ENCODE measurements at regions of chr3 and their contacts with region 1.

Region 1: DNA sequence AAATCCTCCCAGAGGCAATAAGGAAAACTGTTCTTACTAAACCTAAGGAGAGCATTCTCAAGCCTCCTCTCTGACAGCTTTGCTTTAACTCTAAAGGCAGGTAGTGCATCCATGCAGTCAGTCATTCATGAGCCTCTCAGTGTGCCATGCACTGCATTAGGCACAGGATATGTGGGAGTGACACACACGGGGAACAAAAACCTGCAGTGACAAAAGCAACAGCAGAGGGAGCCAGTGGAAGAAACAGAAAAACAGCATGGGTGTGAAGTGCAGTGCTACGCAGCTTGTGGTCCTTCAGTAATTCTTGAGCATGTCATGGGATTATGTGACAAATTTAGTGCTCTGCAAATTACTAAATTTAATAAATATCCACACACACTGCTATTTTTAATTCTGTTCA is 230.7 kb downstream of the BBX start:
- DNase-seq: peak; percentile 31 to 45
- H3K4me3 ChIP-seq: no peak overlapping the region
- H3K4me3 Mint-ChIP-seq: no peak overlapping the region
- H3K27ac Mint-ChIP-seq: no peak overlapping the region
- H3K4me1 ChIP-seq: no peaks in the 10 kb centered on the region
- H3K4me1 Mint-ChIP-seq: no peaks in the 10 kb centered on the region
- H3K27me3 ChIP-seq: no peaks in the 10 kb centered on the region
- H3K27me3 Mint-ChIP-seq: no peaks in the 10 kb centered on the region
- CTCF ChIP-seq: peak in 1 of 2 experiments; percentile 27

Region 2: DNA sequence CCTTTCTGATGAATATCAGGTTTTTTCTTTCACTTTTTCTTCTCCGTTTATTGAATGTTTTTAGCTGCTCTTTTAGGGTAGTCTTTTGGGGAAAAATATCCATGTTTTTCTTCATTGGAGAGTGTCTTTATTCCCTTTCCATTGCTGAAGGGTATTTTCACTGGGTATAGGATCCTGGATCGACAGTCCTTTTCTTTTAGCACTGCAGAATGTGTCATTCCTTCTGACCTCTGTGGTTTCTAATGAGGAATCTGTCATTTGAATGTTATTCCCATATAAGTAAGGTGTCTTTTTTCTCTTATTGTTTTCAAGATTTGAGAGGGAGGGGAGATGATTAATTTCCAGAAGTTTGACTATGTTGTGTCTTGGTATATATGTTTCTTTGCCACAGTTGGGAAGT is 133.9 kb before region 1 on chr3:
- CTCF ChIA-PET with region 1: no interaction called
- POLR2A ChIA-PET with region 1: no interaction called
- intact Hi-C with region 1: no loop called
- DNase-seq: no peak
- H3K4me3 ChIP-seq: no peak overlapping the region
- H3K4me3 Mint-ChIP-seq: no peak overlapping the region
- H3K27ac Mint-ChIP-seq: no peak overlapping the region
- H3K4me1 ChIP-seq: no peaks in the 10 kb centered on the region
- H3K4me1 Mint-ChIP-seq: no peaks in the 10 kb centered on the region
- H3K27me3 ChIP-seq: no peaks in the 10 kb centered on the region
- H3K27me3 Mint-ChIP-seq: peaks cover 14% of the 10 kb centered on the region
- CTCF ChIP-seq: no peak

Region 3: DNA sequence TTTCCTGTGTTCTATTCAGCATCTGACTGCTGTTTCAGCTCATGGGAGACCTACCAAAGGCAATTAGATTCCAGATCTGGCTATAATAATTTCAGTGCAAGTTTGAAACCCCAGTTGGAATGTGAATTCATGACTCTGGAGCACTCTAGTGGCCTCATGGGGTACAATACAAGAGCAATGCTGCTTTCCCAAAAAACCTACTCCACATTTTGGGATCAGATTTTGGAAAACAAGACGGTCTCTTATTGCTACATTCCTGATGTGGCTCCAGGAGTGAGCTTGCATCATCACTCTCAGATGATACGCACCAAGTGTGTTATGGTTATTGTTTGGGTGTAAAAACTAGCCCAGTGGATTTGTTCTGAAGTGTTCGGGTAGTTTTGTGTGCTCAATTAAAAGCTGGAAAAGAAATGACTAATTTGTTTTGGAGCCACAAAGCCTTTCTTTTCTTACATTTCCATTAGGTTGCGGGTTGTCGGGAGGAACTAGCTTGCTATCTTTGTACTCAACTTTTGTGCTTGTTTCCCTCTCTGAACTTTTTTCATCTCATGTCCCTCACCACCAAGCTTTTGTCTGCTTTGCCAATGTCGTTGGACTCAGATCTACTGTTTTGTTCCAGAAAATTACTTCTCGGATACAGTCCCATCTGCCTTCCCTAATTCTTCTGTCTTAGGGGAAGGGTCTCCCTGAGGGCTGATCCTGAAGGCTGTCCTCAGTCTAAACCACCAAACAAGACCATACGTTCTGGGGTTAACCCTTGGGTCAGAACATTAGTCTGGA is 41.4 kb after region 1 on chr3:
- CTCF ChIA-PET with region 1: no interaction called
- POLR2A ChIA-PET with region 1: no interaction called
- intact Hi-C with region 1: loop called (anchors 1 kb)
- DNase-seq: no peak
- H3K4me3 ChIP-seq: no peak overlapping the region
- H3K4me3 Mint-ChIP-seq: no peak overlapping the region
- H3K27ac Mint-ChIP-seq: no peak overlapping the region
- H3K4me1 ChIP-seq: no peaks in the 10 kb centered on the region
- H3K4me1 Mint-ChIP-seq: no peaks in the 10 kb centered on the region
- H3K27me3 ChIP-seq: no peaks in the 10 kb centered on the region
- H3K27me3 Mint-ChIP-seq: peaks cover 7% of the 10 kb centered on the region
- CTCF ChIP-seq: peak in 1 of 2 experiments; percentile 42

Region 4: DNA sequence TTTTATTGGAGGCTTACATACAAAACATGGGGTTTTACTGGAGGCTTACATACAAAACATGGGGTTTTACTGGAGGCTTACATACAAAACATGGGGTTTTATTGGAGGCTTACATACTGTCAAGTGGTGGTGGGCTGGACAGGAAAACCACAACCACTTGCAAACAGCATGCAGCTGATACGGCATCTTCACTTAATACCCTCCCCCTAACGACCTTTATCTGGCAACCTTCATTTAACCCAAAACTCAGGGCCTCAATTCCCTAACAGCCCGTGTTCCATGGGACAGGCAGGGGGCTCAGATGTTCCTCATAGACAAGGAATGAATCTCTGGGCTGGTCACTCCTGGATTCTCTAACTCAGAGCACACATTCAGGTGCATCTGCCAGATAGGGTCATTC is 200.2 kb after region 1 on chr3:
- CTCF ChIA-PET with region 1: no interaction called
- POLR2A ChIA-PET with region 1: no interaction called
- intact Hi-C with region 1: no loop called
- DNase-seq: no peak
- H3K4me3 ChIP-seq: no peak overlapping the region
- H3K4me3 Mint-ChIP-seq: no peak overlapping the region
- H3K27ac Mint-ChIP-seq: no peak overlapping the region
- H3K4me1 ChIP-seq: peaks cover 16% of the 10 kb centered on the region
- H3K4me1 Mint-ChIP-seq: no peaks in the 10 kb centered on the region
- H3K27me3 ChIP-seq: no peaks in the 10 kb centered on the region
- H3K27me3 Mint-ChIP-seq: no peaks in the 10 kb centered on the region
- CTCF ChIP-seq: no peak